ENCODE measurements at regions of chr15 and their contacts with region 1.

Region 1: DNA sequence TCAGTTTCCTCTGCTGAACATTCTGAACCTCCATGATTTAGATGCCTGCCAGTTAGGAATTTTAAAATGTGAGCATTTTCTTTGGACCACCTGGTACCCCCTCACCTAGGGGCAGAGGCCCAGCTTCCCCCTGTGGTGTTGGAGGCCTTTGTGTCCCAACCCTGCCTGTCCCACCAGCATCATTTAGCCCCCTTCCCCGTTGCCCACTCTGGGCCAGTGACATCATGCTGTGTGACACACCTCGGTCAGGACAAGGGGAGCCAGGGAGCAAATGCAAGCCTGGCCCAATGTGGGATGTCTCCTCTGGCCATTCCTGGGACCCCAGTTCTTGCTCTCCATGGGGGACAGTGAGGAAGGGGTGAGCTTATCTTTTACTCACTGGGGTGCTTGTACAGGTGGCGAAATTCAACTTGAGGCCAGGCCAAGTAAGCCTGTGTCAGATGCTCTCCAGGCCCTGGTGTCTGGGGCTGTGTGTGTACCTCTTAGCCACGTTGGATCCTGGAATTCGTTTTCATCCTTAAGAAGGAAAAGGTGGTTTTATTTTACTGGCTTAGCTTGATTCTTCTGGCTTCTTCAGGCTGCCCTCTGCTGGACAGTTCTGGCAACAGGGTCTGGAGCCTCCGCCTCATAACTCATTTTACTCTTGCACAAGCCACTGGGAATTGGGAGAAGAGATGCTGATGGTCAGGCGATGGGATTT is 49.7 kb upstream of the MYZAP start:
- DNase-seq: peak; percentile 52
- H3K4me3 Mint-ChIP-seq: no peak overlapping the region
- H3K27ac Mint-ChIP-seq: no peak overlapping the region
- H3K4me1 Mint-ChIP-seq: peaks cover 6% of the 10 kb centered on the region
- H3K27me3 Mint-ChIP-seq: peaks cover 11% of the 10 kb centered on the region

Region 2: DNA sequence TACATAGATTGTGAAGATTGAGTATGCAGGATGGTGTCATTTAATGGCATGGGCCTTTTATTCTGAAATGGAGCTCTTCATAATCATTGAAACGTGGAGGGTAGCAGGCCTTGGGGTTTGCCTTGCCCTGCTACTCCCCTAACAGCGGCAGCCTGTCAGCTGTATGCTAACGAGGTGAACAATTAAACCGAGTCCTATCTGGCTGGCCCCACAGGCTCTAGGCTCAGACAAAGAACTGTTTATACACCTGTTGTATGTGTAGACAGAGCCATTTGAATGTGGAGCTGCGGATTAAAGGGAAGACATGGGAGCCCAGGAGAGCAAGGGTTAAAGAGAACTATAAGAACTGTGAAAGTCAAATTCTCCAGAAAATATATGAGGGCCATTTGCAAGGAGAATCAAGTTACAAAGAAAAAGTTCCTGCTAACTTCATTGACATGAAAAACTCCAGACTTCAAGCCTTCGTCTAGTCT is 282.4 kb before region 1 on chr15:
- CTCF ChIA-PET with region 1: no interaction called
- POLR2A ChIA-PET with region 1: no interaction called
- intact Hi-C with region 1: no loop called
- DNase-seq: no peak
- H3K4me3 Mint-ChIP-seq: no peak overlapping the region
- H3K27ac Mint-ChIP-seq: no peak overlapping the region
- H3K4me1 Mint-ChIP-seq: no peaks in the 10 kb centered on the region
- H3K27me3 Mint-ChIP-seq: no peaks in the 10 kb centered on the region

Region 3: GRCh38 chr15:57340682-57341259 is 201.2 kb before region 1 on chr15:
- CTCF ChIA-PET with region 1: interaction called, 30 read pairs
- POLR2A ChIA-PET with region 1: no interaction called
- intact Hi-C with region 1: loop called (anchors 1 kb)
- DNase-seq: peak; percentile 53
- H3K4me3 Mint-ChIP-seq: no peak overlapping the region
- H3K27ac Mint-ChIP-seq: no peak overlapping the region
- H3K4me1 Mint-ChIP-seq: no peaks in the 10 kb centered on the region
- H3K27me3 Mint-ChIP-seq: peaks cover 8% of the 10 kb centered on the region

Measured in activated CD4-positive, alpha-beta memory T cell treated with anti-CD3 and anti-CD28 coated beads for 36 hours (primary cell).